Activated naive CD4-positive, alpha-beta T cell treated with anti-CD3 and anti-CD28 coated beads for 36 hours (primary cell): ENCODE measurements at regions of chr14 and their contacts with region 1.

Region 1: GRCh38 chr14:21383848-21384493 is at the start of gene SUPT16H:
- DNase-seq: peak; percentile 97
- H3K4me3 Mint-ChIP-seq: peak within 1 kb of the TSS; percentile 98
- H3K27ac Mint-ChIP-seq: peak within 1 kb of the TSS; percentile 99
- H3K4me1 Mint-ChIP-seq: peaks cover 34% of the 10 kb centered on the region
- H3K27me3 Mint-ChIP-seq: no peaks in the 10 kb centered on the region
- total RNA-seq, gene SUPT16H: 164 to 165 TPM

Region 2: DNA sequence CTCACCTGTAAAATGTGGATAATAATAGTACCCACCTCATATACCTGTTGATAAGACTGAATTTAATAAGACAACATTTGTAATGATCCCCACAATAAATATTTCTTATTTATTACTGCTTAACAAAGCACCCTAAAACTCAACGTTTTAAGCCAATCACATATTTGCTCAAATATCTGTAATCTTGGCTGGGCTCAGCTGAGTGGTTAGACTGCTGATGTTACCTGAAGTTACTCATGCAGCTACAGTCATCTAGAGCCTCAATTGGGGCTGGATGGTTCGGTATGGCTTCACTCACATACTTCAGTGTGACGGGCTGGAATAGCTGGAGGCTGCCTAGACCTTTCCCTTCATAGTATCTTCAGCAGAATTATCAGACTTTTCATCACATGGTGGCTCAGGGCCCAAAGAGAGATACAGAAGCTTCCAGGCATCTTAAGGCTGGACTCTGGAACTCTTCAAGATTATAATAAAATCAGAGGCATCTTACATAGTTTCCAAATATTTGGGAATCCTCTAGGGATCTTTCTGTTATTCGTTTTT is 223.8 kb before region 1 on chr14:
- CTCF ChIA-PET with region 1: no interaction called
- intact Hi-C with region 1: no loop called
- DNase-seq: no peak
- H3K4me3 Mint-ChIP-seq: no peak overlapping the region
- H3K27ac Mint-ChIP-seq: no peak overlapping the region
- H3K4me1 Mint-ChIP-seq: peaks cover 3% of the 10 kb centered on the region
- H3K27me3 Mint-ChIP-seq: peaks cover 9% of the 10 kb centered on the region

Region 3: GRCh38 chr14:21308479-21309237 is 75.3 kb before region 1 on chr14:
- CTCF ChIA-PET with region 1: no interaction called
- intact Hi-C with region 1: loop called (anchors 1 kb)
- DNase-seq: peak; percentile 94
- H3K4me3 Mint-ChIP-seq: peak overlapping the region; percentile 66
- H3K27ac Mint-ChIP-seq: peak overlapping the region; percentile 87
- H3K4me1 Mint-ChIP-seq: peaks cover 23% of the 10 kb centered on the region
- H3K27me3 Mint-ChIP-seq: no peaks in the 10 kb centered on the region

Region 4: DNA sequence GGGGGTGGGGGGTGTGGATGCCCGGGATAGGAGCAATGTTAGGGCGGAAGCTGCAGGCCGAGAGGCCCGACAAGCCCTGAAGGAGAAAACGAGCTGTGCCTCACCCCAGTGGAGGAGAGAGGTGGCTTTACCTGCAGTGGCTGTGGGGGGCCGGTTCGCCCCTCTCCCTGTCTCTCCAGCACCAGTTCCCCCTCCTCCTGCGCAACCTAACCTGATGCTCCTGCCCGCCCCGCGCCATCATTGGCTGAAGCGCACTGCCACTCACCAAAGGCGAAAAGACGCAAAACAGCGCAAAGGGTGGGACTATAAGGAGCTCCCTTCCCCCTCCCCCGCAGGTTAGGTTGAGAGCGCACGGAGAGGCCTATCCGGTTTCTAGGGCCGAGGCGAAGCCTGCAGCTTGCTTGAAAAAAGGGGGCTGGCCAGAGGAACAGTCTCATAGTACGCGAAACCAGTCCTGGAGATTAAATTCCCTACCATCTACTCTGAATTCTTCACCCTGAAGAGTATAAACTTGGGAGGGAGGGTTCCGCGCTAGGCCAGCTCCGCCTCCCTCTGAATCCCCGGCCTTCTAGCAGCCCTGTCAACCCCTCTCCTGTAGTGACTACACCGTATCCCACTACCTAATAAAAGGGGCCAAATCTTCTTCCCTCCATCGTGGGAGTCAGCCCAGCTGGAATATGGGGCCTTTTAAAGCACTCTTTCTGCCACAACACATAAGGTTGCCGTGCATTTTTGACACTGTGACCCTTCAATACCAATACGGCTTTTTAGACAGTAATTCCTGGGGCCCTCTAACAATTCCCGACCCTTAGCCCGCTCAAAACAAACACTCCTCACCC is 53.3 kb after region 1 on chr14:
- CTCF ChIA-PET with region 1: no interaction called
- intact Hi-C with region 1: loop called (anchors 1 kb)
- DNase-seq: peak; percentile 100
- H3K4me3 Mint-ChIP-seq: peak overlapping the region; percentile 84
- H3K27ac Mint-ChIP-seq: peak overlapping the region; percentile 90
- H3K4me1 Mint-ChIP-seq: peaks cover 52% of the 10 kb centered on the region
- H3K27me3 Mint-ChIP-seq: no peaks in the 10 kb centered on the region

Region 5: DNA sequence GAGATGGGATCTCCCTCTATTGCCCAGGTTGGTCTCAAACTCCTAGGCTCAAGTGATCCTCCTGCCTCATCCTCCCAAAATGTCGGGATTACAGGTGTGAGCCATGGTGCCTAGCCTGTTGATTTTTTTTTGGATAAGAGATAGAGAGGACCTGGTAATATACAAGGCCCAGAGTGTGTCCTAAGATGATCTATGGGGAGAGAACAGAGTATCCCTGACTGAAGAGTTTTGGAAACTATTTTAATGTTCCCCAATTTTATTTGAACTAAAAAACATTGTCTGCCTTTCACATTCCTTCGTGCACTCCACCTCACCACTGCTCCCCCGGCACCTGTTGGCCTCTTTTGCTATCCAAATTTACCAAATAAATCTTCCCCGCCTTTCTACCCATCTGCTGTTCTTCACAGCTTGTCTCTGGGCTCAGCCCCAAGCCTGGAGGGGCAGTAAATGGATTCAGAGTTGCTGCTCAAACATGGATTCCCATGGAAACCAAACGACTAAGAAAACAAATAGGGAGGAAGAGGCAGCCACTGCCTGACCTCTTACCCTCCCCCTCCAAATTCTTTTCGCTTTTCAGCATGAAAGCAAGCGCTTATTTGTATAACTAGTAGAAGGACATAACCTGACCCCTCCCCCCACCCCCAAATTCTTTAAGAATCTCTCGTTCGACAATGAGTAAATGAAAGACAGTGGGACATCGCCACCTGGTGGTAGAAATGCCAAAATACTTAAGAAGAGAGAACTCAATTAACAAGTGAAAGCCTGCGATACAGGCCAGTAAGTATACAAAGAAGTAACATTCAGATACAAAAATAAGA is 173.3 kb after region 1 on chr14:
- CTCF ChIA-PET with region 1: no interaction called
- intact Hi-C with region 1: loop called (anchors 1 kb)
- DNase-seq: peak; percentile 91
- H3K4me3 Mint-ChIP-seq: peak overlapping the region; percentile 27
- H3K27ac Mint-ChIP-seq: no peak overlapping the region
- H3K4me1 Mint-ChIP-seq: peaks cover 6% of the 10 kb centered on the region
- H3K27me3 Mint-ChIP-seq: no peaks in the 10 kb centered on the region